CD4-positive, alpha-beta memory T cell (primary cell): ENCODE measurements at regions of chr20 and their contacts with region 1.

Region 1: GRCh38 chr20:21395666-21396598 is 1.4 kb downstream of the NKX2-4 start:
- DNase-seq: peak; percentile 54 to 74 (median 56)
- H3K4me3 ChIP-seq: no peak overlapping the region
- H3K4me3 Mint-ChIP-seq: peak overlapping the region in 7 of 8 donors; percentile 71 to 89 (median 79)
- H3K27ac ChIP-seq: no peak overlapping the region
- H3K27ac Mint-ChIP-seq: peak overlapping the region in 5 of 7 donors; percentile 6 to 88 (median 18)
- H3K4me1 ChIP-seq: peaks cover 20% of the 10 kb centered on the region
- H3K4me1 Mint-ChIP-seq: peaks cover 13 to 25% (median 16%) of the 10 kb centered on the region in 4 donors
- H3K27me3 ChIP-seq: peaks cover 76% of the 10 kb centered on the region
- H3K27me3 Mint-ChIP-seq: peaks cover 49 to 67% of the 10 kb centered on the region in 2 donors

Region 2: GRCh38 chr20:21099751-21100577 is 296.0 kb before region 1 on chr20:
- CTCF ChIA-PET with region 1: no interaction called
- POLR2A ChIA-PET with region 1: no interaction called
- intact Hi-C with region 1: loop called (anchors 10 kb)
- DNase-seq: peak in 4 of 5 donors; percentile 44 to 62 (median 48)
- H3K4me3 ChIP-seq: peak overlapping the region; percentile 54 to 62
- H3K4me3 Mint-ChIP-seq: peak overlapping the region; percentile 80 to 98 (median 88)
- H3K27ac ChIP-seq: no peak overlapping the region
- H3K27ac Mint-ChIP-seq: peak overlapping the region; percentile 42 to 93 (median 74)
- H3K4me1 ChIP-seq: peaks cover 44% of the 10 kb centered on the region
- H3K4me1 Mint-ChIP-seq: peaks cover 16 to 59% (median 42%) of the 10 kb centered on the region in 4 donors
- H3K27me3 ChIP-seq: peaks cover 65% of the 10 kb centered on the region
- H3K27me3 Mint-ChIP-seq: peaks cover 61% of the 10 kb centered on the region in 2 donors